B cell (primary cell): ENCODE measurements at regions of chr1 and their contacts with region 1.

Region 1: DNA sequence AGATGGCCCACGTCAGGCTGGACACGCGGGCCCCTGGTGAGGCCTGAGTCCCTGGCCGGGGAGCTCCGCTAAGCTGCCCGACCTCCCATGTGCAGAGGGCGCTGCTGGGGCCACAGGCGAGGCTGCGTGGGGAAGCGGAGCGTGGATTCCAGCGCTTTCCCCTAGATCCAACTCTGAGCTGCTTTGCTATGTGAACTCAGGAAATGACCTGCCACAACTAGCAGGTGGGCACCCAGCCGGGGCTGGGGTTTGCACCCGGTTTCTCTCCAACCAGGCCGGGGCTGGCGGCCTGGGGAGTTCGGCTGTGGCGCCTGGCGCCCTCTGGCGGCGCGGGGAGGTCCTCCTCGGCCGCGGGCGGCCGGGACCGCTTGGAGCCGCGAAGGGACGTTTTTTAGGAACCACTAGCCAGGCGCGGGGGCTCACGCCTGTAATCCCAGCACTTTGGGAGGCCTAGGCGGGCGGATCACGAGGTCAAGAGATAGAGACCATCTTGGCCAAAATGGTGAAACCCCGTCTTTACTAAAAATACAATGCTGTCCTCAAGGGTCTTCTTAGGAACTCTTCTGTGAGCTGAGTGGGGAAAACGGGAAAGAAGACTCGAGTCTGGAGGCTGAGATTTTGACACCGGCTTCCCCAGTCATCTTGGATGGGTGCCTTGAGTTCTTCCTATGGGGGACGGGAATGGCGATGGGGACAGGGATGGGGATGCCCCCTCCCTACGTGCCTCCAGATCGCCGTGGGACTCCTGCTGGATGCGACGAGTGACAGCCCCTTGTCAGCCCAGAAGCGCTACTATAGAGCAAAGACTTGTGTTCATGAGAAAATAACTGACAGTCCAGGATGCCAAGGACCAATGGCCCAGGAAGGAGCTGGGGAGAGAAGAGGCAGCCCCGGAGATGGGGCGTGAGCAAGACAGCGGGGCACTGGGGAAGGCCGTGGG is 12.6 kb downstream of the PYCR2 start:
- DNase-seq: peak; percentile 80
- ATAC-seq: peak; percentile 85
- H3K4me3 ChIP-seq: no peak overlapping the region
- H3K4me3 Mint-ChIP-seq: no peak overlapping the region
- H3K27ac ChIP-seq: peak overlapping the region in 1 of 2 donors; percentile 29
- H3K27ac Mint-ChIP-seq: peak overlapping the region; percentile 10
- H3K4me1 ChIP-seq: peaks cover 24 to 28% of the 10 kb centered on the region in 2 donors
- H3K4me1 Mint-ChIP-seq: peaks cover 20% of the 10 kb centered on the region
- H3K27me3 ChIP-seq: no peaks in the 10 kb centered on the region
- H3K27me3 Mint-ChIP-seq: no peaks in the 10 kb centered on the region
- CTCF ChIP-seq: peak; percentile 84

Region 2: GRCh38 chr1:225474986-225475820 is 436.3 kb before region 1 on chr1:
- CTCF ChIA-PET with region 1: interaction called, 32 read pairs
- POLR2A ChIA-PET with region 1: no interaction called
- intact Hi-C with region 1: loop called (anchors 1 kb)
- DNase-seq: peak; percentile 84
- ATAC-seq: peak; percentile 92
- H3K4me3 ChIP-seq: no peak overlapping the region
- H3K4me3 Mint-ChIP-seq: no peak overlapping the region
- H3K27ac ChIP-seq: no peak overlapping the region
- H3K27ac Mint-ChIP-seq: peak overlapping the region; percentile 32
- H3K4me1 ChIP-seq: peaks cover 32 to 44% of the 10 kb centered on the region in 2 donors
- H3K4me1 Mint-ChIP-seq: peaks cover 38% of the 10 kb centered on the region
- H3K27me3 ChIP-seq: no peaks in the 10 kb centered on the region
- H3K27me3 Mint-ChIP-seq: no peaks in the 10 kb centered on the region
- CTCF ChIP-seq: peak; percentile 100

Region 3: DNA sequence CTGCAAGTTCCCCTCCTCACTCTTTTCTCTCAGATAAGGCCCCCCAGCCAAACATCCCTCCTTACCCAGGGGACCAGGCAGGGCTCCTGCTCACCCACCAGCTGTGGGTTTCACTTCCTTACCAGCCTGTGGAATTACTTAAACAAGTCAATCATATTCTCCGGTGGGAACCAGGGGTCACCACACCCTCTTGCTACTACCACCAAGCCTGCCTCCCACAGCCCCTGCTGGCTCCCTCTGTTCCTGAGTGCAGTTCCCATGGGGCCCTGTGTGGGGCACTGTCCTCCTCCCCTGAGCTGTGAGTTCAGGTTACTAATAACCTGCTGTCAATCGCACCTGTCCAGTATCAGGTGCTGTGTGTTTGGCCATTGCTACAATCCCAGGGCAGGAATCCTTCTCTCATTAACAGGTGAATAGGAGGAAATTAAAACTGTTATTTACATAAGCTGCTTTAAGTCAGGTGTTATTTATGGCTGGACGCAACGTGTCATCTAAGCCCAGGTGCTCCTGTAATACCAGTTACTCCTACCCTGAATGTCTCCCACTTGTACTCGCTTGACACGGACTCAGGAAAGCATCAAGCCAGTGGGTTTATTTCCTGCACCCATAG is 430.5 kb before region 1 on chr1:
- CTCF ChIA-PET with region 1: interaction called, 32 read pairs
- POLR2A ChIA-PET with region 1: no interaction called
- intact Hi-C with region 1: no loop called
- DNase-seq: peak; percentile 84
- ATAC-seq: peak; percentile 88
- H3K4me3 ChIP-seq: peak overlapping the region in 1 of 5 experiments; percentile 4
- H3K4me3 Mint-ChIP-seq: peak overlapping the region; percentile 67
- H3K27ac ChIP-seq: peak overlapping the region; percentile 17 to 50
- H3K27ac Mint-ChIP-seq: peak overlapping the region; percentile 69
- H3K4me1 ChIP-seq: peaks cover 45 to 53% of the 10 kb centered on the region in 2 donors
- H3K4me1 Mint-ChIP-seq: peaks cover 58% of the 10 kb centered on the region
- H3K27me3 ChIP-seq: no peaks in the 10 kb centered on the region
- H3K27me3 Mint-ChIP-seq: no peaks in the 10 kb centered on the region
- CTCF ChIP-seq: peak; percentile 90

Region 4: GRCh38 chr1:225554216-225554812 is 357.1 kb before region 1 on chr1:
- CTCF ChIA-PET with region 1: interaction called, 6 read pairs
- POLR2A ChIA-PET with region 1: no interaction called
- intact Hi-C with region 1: loop called (anchors 10 kb)
- DNase-seq: peak; percentile 39
- ATAC-seq: no peak
- H3K4me3 ChIP-seq: no peak overlapping the region
- H3K4me3 Mint-ChIP-seq: no peak overlapping the region
- H3K27ac ChIP-seq: no peak overlapping the region
- H3K27ac Mint-ChIP-seq: no peak overlapping the region
- H3K4me1 ChIP-seq: no peaks in the 10 kb centered on the region
- H3K4me1 Mint-ChIP-seq: no peaks in the 10 kb centered on the region
- H3K27me3 ChIP-seq: no peaks in the 10 kb centered on the region
- H3K27me3 Mint-ChIP-seq: peaks cover 3% of the 10 kb centered on the region
- CTCF ChIP-seq: peak; percentile 78

Region 5: GRCh38 chr1:225772323-225772768 is 139.1 kb before region 1 on chr1:
- CTCF ChIA-PET with region 1: interaction called, 28 read pairs
- POLR2A ChIA-PET with region 1: interaction called, 6 read pairs
- intact Hi-C with region 1: loop called (anchors 1 kb)
- DNase-seq: peak; percentile 51
- ATAC-seq: peak; percentile 60
- H3K4me3 ChIP-seq: no peak overlapping the region
- H3K4me3 Mint-ChIP-seq: no peak overlapping the region
- H3K27ac ChIP-seq: no peak overlapping the region
- H3K27ac Mint-ChIP-seq: no peak overlapping the region
- H3K4me1 ChIP-seq: peaks cover 9 to 10% of the 10 kb centered on the region in 2 donors
- H3K4me1 Mint-ChIP-seq: peaks cover 3% of the 10 kb centered on the region
- H3K27me3 ChIP-seq: no peaks in the 10 kb centered on the region
- H3K27me3 Mint-ChIP-seq: no peaks in the 10 kb centered on the region
- CTCF ChIP-seq: no peak

Region 6: DNA sequence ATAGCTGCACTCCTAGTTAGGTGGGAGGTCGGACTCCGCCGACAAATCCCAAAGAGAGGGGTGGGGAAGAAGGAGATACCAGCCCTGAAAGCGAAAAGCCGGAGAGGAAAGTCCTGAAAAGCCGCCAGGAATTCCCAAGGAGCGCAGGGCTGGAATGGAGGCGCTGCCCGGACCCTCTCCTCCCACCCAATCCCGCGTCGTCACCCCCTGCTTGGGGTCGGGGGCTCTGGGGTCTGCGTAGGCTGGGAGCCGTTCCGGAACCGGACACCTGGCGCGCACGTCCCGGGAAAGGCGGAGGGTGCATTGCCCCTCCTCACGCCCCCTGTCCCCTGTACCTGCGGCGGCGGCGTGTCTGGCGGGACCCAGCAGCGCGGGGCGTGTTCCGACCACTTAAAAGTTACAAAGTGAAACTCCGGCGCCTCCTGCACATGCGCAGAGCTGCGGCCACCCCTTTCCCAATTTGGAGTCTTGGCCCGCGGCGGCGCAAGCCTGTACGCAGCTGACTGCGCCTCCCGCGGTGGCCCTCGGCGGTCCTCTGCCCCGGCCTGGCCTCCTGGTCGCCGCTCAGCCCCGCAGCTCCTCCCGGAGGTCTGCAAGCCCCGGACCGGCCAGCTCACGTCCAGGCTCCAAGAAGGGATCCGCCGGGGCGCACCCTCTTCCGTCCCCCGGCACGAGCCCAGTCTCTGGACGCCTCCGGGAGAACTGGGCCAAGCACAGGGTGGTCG is 29.3 kb before region 1 on chr1 and contains the start of gene TMEM63A:
- CTCF ChIA-PET with region 1: interaction called, 59 read pairs
- POLR2A ChIA-PET with region 1: interaction called, 5 read pairs
- intact Hi-C with region 1: loop called (anchors 1 kb)
- DNase-seq: peak; percentile 91
- ATAC-seq: peak; percentile 78
- H3K4me3 ChIP-seq: peak within 1 kb of the TSS; percentile 86 to 99 (median 96)
- H3K4me3 Mint-ChIP-seq: peak within 1 kb of the TSS; percentile 96
- H3K27ac ChIP-seq: peak within 1 kb of the TSS; percentile 51 to 74
- H3K27ac Mint-ChIP-seq: peak within 1 kb of the TSS; percentile 91
- H3K4me1 ChIP-seq: peaks cover 30 to 42% of the 10 kb centered on the region in 2 donors
- H3K4me1 Mint-ChIP-seq: peaks cover 48% of the 10 kb centered on the region
- H3K27me3 ChIP-seq: no peaks in the 10 kb centered on the region
- H3K27me3 Mint-ChIP-seq: no peaks in the 10 kb centered on the region
- CTCF ChIP-seq: peak; percentile 23
- total RNA-seq, gene TMEM63A: 238 and 267 TPM in 2 replicates

Region 7: GRCh38 chr1:225888898-225889601 is 22.4 kb before region 1 on chr1 and contains the start of gene LEFTY1:
- CTCF ChIA-PET with region 1: interaction called, 59 read pairs
- POLR2A ChIA-PET with region 1: no interaction called
- intact Hi-C with region 1: no loop called
- DNase-seq: no peak
- ATAC-seq: no peak
- H3K4me3 ChIP-seq: no peak within 1 kb of the TSS
- H3K4me3 Mint-ChIP-seq: no peak within 1 kb of the TSS
- H3K27ac ChIP-seq: no peak within 1 kb of the TSS
- H3K27ac Mint-ChIP-seq: no peak within 1 kb of the TSS
- H3K4me1 ChIP-seq: no peaks in the 10 kb centered on the region
- H3K4me1 Mint-ChIP-seq: peaks cover under 1% of the 10 kb centered on the region
- H3K27me3 ChIP-seq: no peaks in the 10 kb centered on the region
- H3K27me3 Mint-ChIP-seq: peaks cover 3% of the 10 kb centered on the region
- CTCF ChIP-seq: no peak
- total RNA-seq, gene LEFTY1: 0.51 TPM in 1 of 2 replicates, not detected in the other

Region 8: DNA sequence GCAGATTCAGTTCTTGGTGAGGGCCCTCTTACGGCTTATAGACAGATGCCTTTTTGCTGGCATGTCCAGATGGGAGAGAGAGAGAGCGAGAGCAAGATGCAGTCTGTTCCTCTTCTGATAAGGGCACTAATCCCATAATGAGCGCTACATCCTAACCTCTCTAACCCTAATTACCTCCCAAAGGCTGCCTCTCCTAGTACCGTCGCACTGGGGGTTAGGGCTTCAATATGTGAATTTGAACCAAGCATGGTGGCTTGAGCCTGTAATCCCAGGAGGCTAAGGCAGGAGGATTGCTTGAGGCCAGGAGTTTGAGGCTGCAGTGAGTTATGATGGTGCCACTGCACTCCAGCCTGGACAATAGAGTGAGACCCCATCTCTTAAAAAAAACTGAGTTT is 98.2 kb after region 1 on chr1:
- CTCF ChIA-PET with region 1: no interaction called
- POLR2A ChIA-PET with region 1: no interaction called
- intact Hi-C with region 1: no loop called
- DNase-seq: no peak
- ATAC-seq: no peak
- H3K4me3 ChIP-seq: no peak overlapping the region
- H3K4me3 Mint-ChIP-seq: no peak overlapping the region
- H3K27ac ChIP-seq: no peak overlapping the region
- H3K27ac Mint-ChIP-seq: no peak overlapping the region
- H3K4me1 ChIP-seq: peaks cover 2 to 3% of the 10 kb centered on the region in 2 donors
- H3K4me1 Mint-ChIP-seq: no peaks in the 10 kb centered on the region
- H3K27me3 ChIP-seq: no peaks in the 10 kb centered on the region
- H3K27me3 Mint-ChIP-seq: no peaks in the 10 kb centered on the region
- CTCF ChIP-seq: no peak